GM10248 (cell line): ENCODE measurements at regions of chr2 and their contacts with region 1.

Region 1: GRCh38 chr2:102291318-102292251 is 19.8 kb upstream of the IL1RL1 start:
- DNase-seq: no peak
- CTCF ChIP-seq: no peak

Region 2: DNA sequence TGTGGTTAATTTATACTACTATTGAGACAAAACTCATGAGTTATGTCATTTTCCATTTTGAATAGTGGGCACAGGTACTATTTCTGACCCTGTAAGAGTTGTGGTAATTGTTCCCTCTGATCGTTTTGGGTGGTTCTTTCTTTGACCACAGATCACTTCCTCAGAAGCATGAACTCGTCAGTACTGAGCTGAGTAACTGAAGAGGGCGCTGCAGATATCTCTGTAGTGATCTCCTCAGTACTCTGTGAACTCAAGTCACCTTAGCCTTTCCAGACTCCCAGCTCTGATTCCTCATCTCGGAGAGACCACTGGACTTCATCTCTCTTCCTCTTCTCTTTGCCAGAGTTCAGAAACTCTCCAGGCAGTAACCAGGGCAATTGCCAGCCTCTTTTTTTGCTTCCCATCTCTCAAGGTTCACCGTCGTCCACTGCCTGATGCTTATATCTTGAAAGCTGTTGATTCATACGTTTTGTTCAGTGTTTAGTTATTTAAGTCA is 10.3 kb after region 1 on chr2:
- CTCF ChIA-PET with region 1: interaction called, 11 read pairs
- POLR2A ChIA-PET with region 1: no interaction called
- DNase-seq: peak; percentile 36
- CTCF ChIP-seq: peak; percentile 52